CD8-positive, alpha-beta T cell (primary cell): ENCODE measurements at regions of chr3 and their contacts with region 1.

Region 1: GRCh38 chr3:132773071-132773619 is 50.9 kb upstream of the NPHP3 start:
- DNase-seq: no peak
- ATAC-seq: no peak
- H3K4me3 ChIP-seq: no peak overlapping the region
- H3K4me3 Mint-ChIP-seq: no peak overlapping the region
- H3K27ac ChIP-seq: no peak overlapping the region
- H3K27ac Mint-ChIP-seq: no peak overlapping the region
- H3K4me1 ChIP-seq: no peaks in the 10 kb centered on the region
- H3K4me1 Mint-ChIP-seq: no peaks in the 10 kb centered on the region
- H3K27me3 ChIP-seq: no peaks in the 10 kb centered on the region
- H3K27me3 Mint-ChIP-seq: peaks cover 15% of the 10 kb centered on the region
- CTCF ChIP-seq: no peak

Region 2: GRCh38 chr3:133295199-133295901 is 522.2 kb after region 1 on chr3:
- CTCF ChIA-PET with region 1: no interaction called
- POLR2A ChIA-PET with region 1: no interaction called
- intact Hi-C with region 1: loop called in 1 of 2 experiments (anchors 10 kb)
- DNase-seq: no peak
- ATAC-seq: no peak
- H3K4me3 ChIP-seq: no peak overlapping the region
- H3K4me3 Mint-ChIP-seq: no peak overlapping the region
- H3K27ac ChIP-seq: no peak overlapping the region
- H3K27ac Mint-ChIP-seq: no peak overlapping the region
- H3K4me1 ChIP-seq: no peaks in the 10 kb centered on the region
- H3K4me1 Mint-ChIP-seq: no peaks in the 10 kb centered on the region
- H3K27me3 ChIP-seq: no peaks in the 10 kb centered on the region
- H3K27me3 Mint-ChIP-seq: peaks cover 3% of the 10 kb centered on the region
- CTCF ChIP-seq: no peak

Region 3: DNA sequence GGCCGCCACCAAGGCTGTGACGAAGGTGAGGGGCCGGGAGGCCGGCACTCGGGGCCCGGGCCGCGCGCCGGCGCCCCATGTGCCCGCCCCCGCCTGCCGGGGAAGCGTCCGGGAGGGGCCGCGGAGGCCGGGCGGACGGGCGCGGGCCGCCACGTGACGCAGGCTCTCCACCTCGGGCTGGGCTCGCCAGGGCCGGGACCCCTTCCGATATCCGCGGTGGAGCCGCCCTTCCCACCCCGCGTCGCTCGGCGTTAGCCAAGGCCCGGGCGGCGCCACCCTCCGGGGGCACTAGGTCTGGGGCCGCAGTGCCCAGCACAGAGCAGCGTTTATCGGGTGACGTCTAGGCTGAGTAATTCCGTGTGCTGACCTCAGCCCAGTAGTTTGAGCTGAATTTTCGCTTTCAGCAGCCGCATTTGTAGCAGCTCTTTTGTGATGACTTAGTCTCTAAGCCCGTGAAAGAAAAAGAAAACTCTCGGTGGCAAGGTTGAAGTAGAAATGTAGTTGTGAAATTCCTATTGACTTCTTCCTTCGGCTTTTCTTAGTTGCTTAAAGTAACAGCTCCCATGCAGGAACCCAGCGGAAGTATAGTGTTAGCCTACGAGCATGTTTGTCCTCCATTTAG is 801.2 kb after region 1 on chr3:
- CTCF ChIA-PET with region 1: no interaction called
- POLR2A ChIA-PET with region 1: no interaction called
- intact Hi-C with region 1: no loop called
- DNase-seq: peak; percentile 34 to 86 (median 75)
- ATAC-seq: peak; percentile 13
- H3K4me3 ChIP-seq: peak overlapping the region; percentile 72 to 84
- H3K4me3 Mint-ChIP-seq: peak overlapping the region; percentile 97
- H3K27ac ChIP-seq: peak overlapping the region; percentile 91 to 93
- H3K27ac Mint-ChIP-seq: peak overlapping the region; percentile 96
- H3K4me1 ChIP-seq: peaks cover 50% of the 10 kb centered on the region
- H3K4me1 Mint-ChIP-seq: peaks cover 70% of the 10 kb centered on the region
- H3K27me3 ChIP-seq: no peaks in the 10 kb centered on the region
- H3K27me3 Mint-ChIP-seq: no peaks in the 10 kb centered on the region
- CTCF ChIP-seq: no peak